Naive thymus-derived CD8-positive, alpha-beta T cell (primary cell): ENCODE measurements at regions of chr14 and their contacts with region 1.

Region 1: GRCh38 chr14:23006544-23007419 is 3.2 kb downstream of the C14orf93 start:
- DNase-seq: peak; percentile 94 to 99 (median 97)
- ATAC-seq: peak; percentile 95 to 96
- H3K4me3 Mint-ChIP-seq: peak overlapping the region; percentile 93 to 98 (median 94)
- H3K27ac Mint-ChIP-seq: peak overlapping the region; percentile 92 to 98 (median 97)
- H3K4me1 Mint-ChIP-seq: peaks cover 16 to 50% (median 41%) of the 10 kb centered on the region in 4 donors
- H3K27me3 Mint-ChIP-seq: no peaks in the 10 kb centered on the region

Region 2: GRCh38 chr14:22955702-22956569 is 50.8 kb before region 1 on chr14:
- POLR2A ChIA-PET with region 1: interaction called, 14 read pairs
- DNase-seq: peak in 1 of 10 donors; percentile 5
- ATAC-seq: no peak
- H3K4me3 Mint-ChIP-seq: peak overlapping the region; percentile 81 to 95 (median 92)
- H3K27ac Mint-ChIP-seq: peak overlapping the region; percentile 79 to 96 (median 92)
- H3K4me1 Mint-ChIP-seq: peaks cover 12 to 21% (median 19%) of the 10 kb centered on the region in 4 donors
- H3K27me3 Mint-ChIP-seq: no peaks in the 10 kb centered on the region

Region 3: GRCh38 chr14:22994762-22995275 is 12.0 kb before region 1 on chr14:
- POLR2A ChIA-PET with region 1: interaction called, 25 read pairs
- DNase-seq: peak in 5 of 10 donors; percentile 37 to 70 (median 55)
- ATAC-seq: peak; percentile 88 to 96
- H3K4me3 Mint-ChIP-seq: no peak overlapping the region
- H3K27ac Mint-ChIP-seq: peak overlapping the region in 1 of 10 donors; percentile 9
- H3K4me1 Mint-ChIP-seq: peaks cover 0 to 3% (median under 1%) of the 10 kb centered on the region in 4 donors
- H3K27me3 Mint-ChIP-seq: no peaks in the 10 kb centered on the region

Region 4: DNA sequence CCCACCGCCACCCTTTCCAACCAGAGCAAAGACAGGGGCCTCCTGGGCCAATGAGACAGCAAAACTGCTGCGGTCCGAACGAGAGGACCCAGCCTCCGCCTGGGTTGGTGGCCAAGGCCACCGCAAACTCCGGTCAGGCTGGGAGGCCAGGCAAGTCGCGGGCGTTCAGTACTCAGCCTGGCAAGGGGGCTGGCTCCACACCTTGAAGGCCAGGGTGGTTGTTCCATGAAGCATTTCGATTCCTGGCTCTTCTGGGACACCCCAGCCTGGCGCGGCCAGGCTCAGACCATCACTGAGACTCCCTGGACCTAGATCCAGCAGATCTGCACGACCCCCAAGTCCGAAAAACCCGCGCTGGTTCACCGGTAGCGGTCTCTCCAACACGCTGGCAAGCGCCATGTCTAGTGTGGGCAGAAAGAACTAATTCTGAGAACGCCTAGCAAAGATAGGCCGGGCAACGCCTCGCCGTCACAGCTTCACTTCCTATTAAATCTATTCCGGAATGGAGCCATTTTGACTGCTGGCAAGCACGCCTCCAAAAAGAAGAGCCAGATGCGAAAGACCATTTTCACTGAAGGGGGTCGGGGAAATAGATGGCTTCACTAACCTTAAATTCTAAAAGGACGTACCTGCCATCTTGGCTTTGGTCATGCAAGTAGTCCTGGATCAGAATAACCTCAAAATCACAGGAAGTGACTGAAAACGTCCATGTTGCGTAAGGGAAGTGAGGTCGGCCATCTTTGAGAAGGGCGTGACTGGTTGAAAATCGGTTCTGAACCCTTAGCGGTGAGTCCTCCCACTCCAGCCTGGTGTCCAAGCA is 27.9 kb after region 1 on chr14 and contains the start of gene PSMB5:
- POLR2A ChIA-PET with region 1: interaction called, 37 read pairs
- DNase-seq: peak; percentile 62 to 96 (median 90)
- ATAC-seq: peak; percentile 92 to 93
- H3K4me3 Mint-ChIP-seq: peak within 1 kb of the TSS; percentile 87 to 96 (median 91)
- H3K27ac Mint-ChIP-seq: peak within 1 kb of the TSS; percentile 93 to 98 (median 98)
- H3K4me1 Mint-ChIP-seq: peaks cover 10 to 40% (median 30%) of the 10 kb centered on the region in 4 donors
- H3K27me3 Mint-ChIP-seq: no peaks in the 10 kb centered on the region
- polyA plus RNA-seq, gene PSMB5: 33.2 to 49.7 (median 37.9) TPM

Region 5: DNA sequence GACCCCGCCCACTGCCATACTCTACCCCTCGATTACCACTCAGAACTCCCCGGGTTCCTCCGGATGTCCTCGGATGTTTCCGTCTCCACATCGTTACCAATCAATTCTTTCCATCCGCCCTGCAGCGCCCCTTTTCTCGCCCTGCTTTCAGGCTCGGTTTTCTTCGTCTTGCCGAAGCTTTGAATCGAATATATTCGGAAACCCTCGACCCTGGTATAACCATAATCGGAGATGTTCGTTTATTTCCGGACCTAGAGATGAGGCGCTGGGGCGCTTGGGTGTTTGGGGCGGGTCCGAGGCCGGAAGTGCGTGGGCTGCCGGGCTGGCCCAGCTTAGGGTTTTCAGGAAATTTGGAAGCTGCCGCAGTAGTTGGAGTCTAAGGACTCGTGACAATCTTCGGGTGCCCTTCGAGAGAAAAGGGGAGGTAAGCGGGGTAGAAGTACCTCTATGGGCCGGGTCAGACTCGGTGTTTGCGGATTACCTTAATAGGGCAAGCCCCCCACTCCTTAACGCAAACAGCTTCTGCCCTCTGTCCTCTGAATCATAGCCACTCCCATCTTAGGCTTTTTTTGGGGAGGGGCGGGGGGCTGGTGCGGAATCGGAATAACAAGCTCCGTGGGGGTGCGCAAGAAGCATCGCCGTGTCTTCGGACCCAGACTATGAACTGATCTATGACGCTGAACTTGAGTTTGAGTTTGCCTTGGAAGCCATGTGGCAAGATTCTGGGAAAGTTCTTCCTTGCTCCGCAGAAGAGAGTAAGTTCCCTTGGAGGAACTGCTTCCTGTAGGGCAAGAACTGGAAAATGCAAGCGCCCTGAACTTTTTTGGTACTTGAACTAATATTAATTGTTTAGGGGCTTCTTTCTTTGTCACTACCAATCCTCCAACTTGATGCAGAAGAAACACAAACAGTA is 88.7 kb after region 1 on chr14 and contains the start of gene C14orf119:
- POLR2A ChIA-PET with region 1: interaction called, 26 read pairs
- DNase-seq: peak in 9 of 10 donors; percentile 81 to 100 (median 100)
- ATAC-seq: peak; percentile 88
- H3K4me3 Mint-ChIP-seq: no peak within 1 kb of the TSS
- H3K27ac Mint-ChIP-seq: no peak within 1 kb of the TSS
- H3K4me1 Mint-ChIP-seq: peaks cover 24 to 60% (median 34%) of the 10 kb centered on the region in 4 donors
- H3K27me3 Mint-ChIP-seq: no peaks in the 10 kb centered on the region
- polyA plus RNA-seq, gene C14orf119: 62.7 to 122 (median 78.5) TPM